Right ventricle myocardium inferior (tissue), 1 donor: ENCODE measurements at regions of chr14 and their contacts with region 1.

Region 1: GRCh38 chr14:95117937-95118721 is 39.2 kb downstream of the DICER1 start:
- DNase-seq: no peak
- ATAC-seq: no peak

Region 2: GRCh38 chr14:94780536-94781399 is 337.4 kb before region 1 on chr14:
- intact Hi-C with region 1: no loop called
- DNase-seq: no peak
- ATAC-seq: no peak

Region 3: GRCh38 chr14:95189367-95190132 is 71.4 kb after region 1 on chr14:
- intact Hi-C with region 1: loop called (anchors 5 kb)
- DNase-seq: no peak
- ATAC-seq: peak; percentile 41